Activated CD8-positive, alpha-beta T cell treated with anti-CD3 and anti-CD28 coated beads, Interleukin-2, amount 10 ng/mL, durations not matched to agents 7 days and 5 days (primary cell): ENCODE measurements at regions of chr6 and their contacts with region 1.

Region 1: DNA sequence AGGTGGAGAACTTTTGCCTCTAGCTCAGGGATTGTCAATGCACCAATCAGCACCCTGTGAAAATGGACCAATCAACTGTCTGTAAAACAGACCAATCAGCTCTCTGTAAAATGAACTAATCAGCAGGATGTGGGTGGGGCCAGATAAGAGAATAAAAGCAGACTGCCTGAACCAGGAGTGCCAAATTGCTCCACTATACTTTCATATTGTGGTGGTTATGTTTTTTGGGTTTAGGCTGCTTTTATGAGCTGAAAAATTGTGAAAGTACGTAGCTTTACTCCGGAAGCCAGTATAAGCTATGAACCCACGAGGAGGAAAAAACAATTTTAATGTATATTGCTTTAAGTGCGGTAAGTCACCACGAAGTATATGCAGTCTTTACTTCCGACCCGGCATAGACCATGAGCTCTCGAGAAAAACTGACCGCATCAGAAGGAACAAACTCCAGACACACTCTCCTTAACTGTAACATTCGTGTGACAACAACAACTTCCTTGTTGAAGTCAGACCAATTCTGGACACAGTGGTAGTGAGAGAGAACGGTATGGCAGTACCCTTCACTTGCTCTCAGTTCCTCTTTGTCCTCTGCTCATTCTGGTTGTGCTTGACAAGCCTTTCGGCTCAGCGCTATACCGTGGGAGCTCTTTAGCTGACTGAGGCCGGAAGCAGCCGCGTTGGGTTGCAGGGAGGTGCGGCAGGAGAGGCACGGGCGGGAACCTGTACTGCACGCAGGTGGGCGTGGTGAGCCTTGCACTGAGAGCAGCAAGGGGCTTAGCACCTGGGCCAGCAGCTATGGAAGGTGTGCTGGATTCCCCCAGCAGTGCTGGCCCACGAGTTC is 81.9 kb upstream of the E2F3 start:
- DNase-seq: peak; percentile 93
- ATAC-seq: peak; percentile 92
- H3K4me3 Mint-ChIP-seq: peak overlapping the region; percentile 80
- H3K27ac Mint-ChIP-seq: peak overlapping the region; percentile 99
- H3K4me1 Mint-ChIP-seq: peaks cover 30% of the 10 kb centered on the region
- H3K27me3 Mint-ChIP-seq: peaks cover 3% of the 10 kb centered on the region

Region 2: GRCh38 chr6:20223141-20223540 is 96.6 kb before region 1 on chr6:
- CTCF ChIA-PET with region 1: no interaction called
- POLR2A ChIA-PET with region 1: no interaction called
- DNase-seq: no peak
- ATAC-seq: no peak
- H3K4me3 Mint-ChIP-seq: no peak overlapping the region
- H3K27ac Mint-ChIP-seq: no peak overlapping the region
- H3K4me1 Mint-ChIP-seq: no peaks in the 10 kb centered on the region
- H3K27me3 Mint-ChIP-seq: peaks cover 7% of the 10 kb centered on the region

Region 3: GRCh38 chr6:20291764-20292580 is 27.8 kb before region 1 on chr6:
- CTCF ChIA-PET with region 1: interaction called, 15 read pairs
- POLR2A ChIA-PET with region 1: interaction called, 15 read pairs
- DNase-seq: peak; percentile 86
- ATAC-seq: peak; percentile 91
- H3K4me3 Mint-ChIP-seq: no peak overlapping the region
- H3K27ac Mint-ChIP-seq: peak overlapping the region; percentile 44
- H3K4me1 Mint-ChIP-seq: peaks cover 29% of the 10 kb centered on the region
- H3K27me3 Mint-ChIP-seq: no peaks in the 10 kb centered on the region

Region 4: GRCh38 chr6:20340068-20340848 is 20.5 kb after region 1 on chr6:
- CTCF ChIA-PET with region 1: interaction called, 8 read pairs
- POLR2A ChIA-PET with region 1: interaction called, 45 read pairs
- DNase-seq: no peak
- ATAC-seq: no peak
- H3K4me3 Mint-ChIP-seq: no peak overlapping the region
- H3K27ac Mint-ChIP-seq: no peak overlapping the region
- H3K4me1 Mint-ChIP-seq: peaks cover 45% of the 10 kb centered on the region
- H3K27me3 Mint-ChIP-seq: no peaks in the 10 kb centered on the region

Region 5: DNA sequence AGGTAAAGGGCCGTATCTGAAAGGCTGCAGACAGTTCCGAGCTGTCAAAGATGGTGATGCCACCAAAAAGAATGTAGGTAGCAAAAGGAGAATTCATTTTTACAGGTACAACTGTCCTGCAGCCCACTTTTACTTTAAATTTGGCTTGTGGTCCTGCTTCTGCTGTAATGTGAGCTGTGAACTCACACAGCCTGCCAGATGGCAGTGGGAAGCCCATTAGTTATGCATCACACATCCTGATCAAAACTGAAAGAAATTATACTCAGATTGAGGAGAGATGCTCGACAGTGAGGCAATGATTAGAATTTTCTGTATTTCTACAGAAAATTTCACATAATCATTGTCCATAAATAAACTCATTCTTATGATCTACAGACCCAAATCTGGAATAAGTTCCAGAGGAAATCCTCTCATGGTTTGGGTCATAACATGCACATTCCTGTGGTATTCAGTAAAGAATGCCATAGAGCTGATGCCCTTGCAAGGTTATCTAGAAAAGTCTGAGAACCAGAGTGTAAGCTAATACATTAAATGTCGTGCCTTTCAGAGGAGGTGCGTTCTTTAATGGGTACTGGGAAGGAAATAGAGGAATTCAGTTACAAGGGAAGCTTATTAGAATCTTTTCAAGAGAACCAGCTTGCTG is 58.0 kb after region 1 on chr6:
- CTCF ChIA-PET with region 1: interaction called, 5 read pairs
- POLR2A ChIA-PET with region 1: interaction called, 34 read pairs
- DNase-seq: no peak
- ATAC-seq: no peak
- H3K4me3 Mint-ChIP-seq: no peak overlapping the region
- H3K27ac Mint-ChIP-seq: no peak overlapping the region
- H3K4me1 Mint-ChIP-seq: peaks cover 22% of the 10 kb centered on the region
- H3K27me3 Mint-ChIP-seq: no peaks in the 10 kb centered on the region

Region 6: GRCh38 chr6:20534295-20535262 is 214.8 kb after region 1 on chr6 and contains the start of gene CDKAL1:
- CTCF ChIA-PET with region 1: no interaction called
- POLR2A ChIA-PET with region 1: interaction called, 18 read pairs
- DNase-seq: peak; percentile 95
- ATAC-seq: peak; percentile 92
- H3K4me3 Mint-ChIP-seq: peak within 1 kb of the TSS; percentile 98
- H3K27ac Mint-ChIP-seq: peak within 1 kb of the TSS; percentile 97
- H3K4me1 Mint-ChIP-seq: peaks cover 43% of the 10 kb centered on the region
- H3K27me3 Mint-ChIP-seq: no peaks in the 10 kb centered on the region
- total RNA-seq, gene CDKAL1: 24.3 to 25.2 TPM

Region 7: DNA sequence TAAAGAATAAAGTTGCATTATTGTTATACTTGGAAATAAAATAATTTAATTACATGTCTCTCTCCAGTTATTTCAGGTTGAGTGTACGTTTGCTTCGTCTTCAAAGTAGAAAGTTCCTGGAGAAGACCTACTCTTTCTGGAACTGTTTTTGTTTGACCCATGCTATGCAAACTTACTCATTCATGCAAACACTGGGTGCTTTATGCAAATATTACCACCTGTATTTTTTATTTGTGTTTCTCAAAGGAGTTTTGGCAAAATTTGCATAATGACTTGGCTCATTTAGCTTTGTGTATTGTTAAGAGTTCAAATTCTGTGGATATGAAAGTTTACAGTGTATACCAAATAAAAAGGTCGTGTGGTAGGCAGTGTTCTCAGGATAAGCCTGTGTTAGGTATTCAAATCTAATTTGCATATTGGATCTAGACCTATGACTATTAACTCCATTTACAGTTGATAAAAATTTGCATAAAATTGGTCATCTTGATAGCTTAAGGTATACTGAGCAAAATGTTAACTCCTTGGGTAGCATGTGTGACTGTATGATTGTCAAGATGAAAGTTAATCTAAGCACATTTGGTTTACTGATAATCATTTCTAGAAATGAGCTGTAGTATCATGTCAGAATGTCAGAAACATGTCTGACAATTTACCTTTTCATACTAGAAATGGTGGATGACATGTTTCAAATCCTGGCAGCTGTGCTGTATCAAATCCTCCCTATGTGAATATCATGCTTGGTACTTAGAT is 279.7 kb after region 1 on chr6:
- CTCF ChIA-PET with region 1: no interaction called
- POLR2A ChIA-PET with region 1: no interaction called
- DNase-seq: no peak
- ATAC-seq: no peak
- H3K4me3 Mint-ChIP-seq: no peak overlapping the region
- H3K27ac Mint-ChIP-seq: no peak overlapping the region
- H3K4me1 Mint-ChIP-seq: no peaks in the 10 kb centered on the region
- H3K27me3 Mint-ChIP-seq: no peaks in the 10 kb centered on the region